CD4-positive, alpha-beta memory T cell (primary cell): ENCODE measurements at regions of chr5 and their contacts with region 1.

Region 1: GRCh38 chr5:141691867-141692532 is 10.0 kb upstream of the ARAP3 start:
- DNase-seq: peak; percentile 76 to 83 (median 76)
- H3K4me3 ChIP-seq: peak overlapping the region; percentile 31 to 76
- H3K4me3 Mint-ChIP-seq: peak overlapping the region; percentile 72 to 89 (median 82)
- H3K27ac ChIP-seq: no peak overlapping the region
- H3K27ac Mint-ChIP-seq: peak overlapping the region in 6 of 7 donors; percentile 36 to 85 (median 66)
- H3K4me1 ChIP-seq: peaks cover 22% of the 10 kb centered on the region
- H3K4me1 Mint-ChIP-seq: peaks cover 20 to 31% (median 24%) of the 10 kb centered on the region in 4 donors
- H3K27me3 ChIP-seq: no peaks in the 10 kb centered on the region
- H3K27me3 Mint-ChIP-seq: peaks cover 4% of the 10 kb centered on the region in 2 donors

Region 2: GRCh38 chr5:141590127-141590526 is 101.9 kb before region 1 on chr5:
- CTCF ChIA-PET with region 1: interaction called, 13 read pairs
- POLR2A ChIA-PET with region 1: no interaction called
- intact Hi-C with region 1: no loop called
- DNase-seq: no peak
- H3K4me3 ChIP-seq: no peak overlapping the region
- H3K4me3 Mint-ChIP-seq: peak overlapping the region in 1 of 8 donors; percentile 3
- H3K27ac ChIP-seq: no peak overlapping the region
- H3K27ac Mint-ChIP-seq: peak overlapping the region in 3 of 7 donors; percentile 13 to 59 (median 43)
- H3K4me1 ChIP-seq: peaks cover 52% of the 10 kb centered on the region
- H3K4me1 Mint-ChIP-seq: peaks cover 45 to 70% (median 55%) of the 10 kb centered on the region in 4 donors
- H3K27me3 ChIP-seq: no peaks in the 10 kb centered on the region
- H3K27me3 Mint-ChIP-seq: no peaks in the 10 kb centered on the region

Region 3: GRCh38 chr5:141605523-141606277 is 86.3 kb before region 1 on chr5:
- CTCF ChIA-PET with region 1: no interaction called
- POLR2A ChIA-PET with region 1: no interaction called
- intact Hi-C with region 1: no loop called
- DNase-seq: peak; percentile 85 to 93 (median 87)
- H3K4me3 ChIP-seq: peak overlapping the region; percentile 13 to 34
- H3K4me3 Mint-ChIP-seq: peak overlapping the region; percentile 67 to 87 (median 81)
- H3K27ac ChIP-seq: peak overlapping the region; percentile 72
- H3K27ac Mint-ChIP-seq: peak overlapping the region; percentile 89 to 95 (median 93)
- H3K4me1 ChIP-seq: peaks cover 97% of the 10 kb centered on the region
- H3K4me1 Mint-ChIP-seq: peaks cover 62 to 95% (median 79%) of the 10 kb centered on the region in 4 donors
- H3K27me3 ChIP-seq: no peaks in the 10 kb centered on the region
- H3K27me3 Mint-ChIP-seq: no peaks in the 10 kb centered on the region

Region 4: GRCh38 chr5:141811287-141812155 is 119.5 kb after region 1 on chr5:
- CTCF ChIA-PET with region 1: interaction called, 81 read pairs
- POLR2A ChIA-PET with region 1: no interaction called
- intact Hi-C with region 1: loop called (anchors 2 kb)
- DNase-seq: peak in 4 of 5 donors; percentile 4 to 45 (median 17)
- H3K4me3 ChIP-seq: no peak overlapping the region
- H3K4me3 Mint-ChIP-seq: peak overlapping the region in 1 of 8 donors; percentile 26
- H3K27ac ChIP-seq: no peak overlapping the region
- H3K27ac Mint-ChIP-seq: no peak overlapping the region
- H3K4me1 ChIP-seq: no peaks in the 10 kb centered on the region
- H3K4me1 Mint-ChIP-seq: peaks cover 0 to 3% (median under 1%) of the 10 kb centered on the region in 4 donors
- H3K27me3 ChIP-seq: peaks cover 15% of the 10 kb centered on the region
- H3K27me3 Mint-ChIP-seq: peaks cover 30 to 64% of the 10 kb centered on the region in 2 donors

Region 5: DNA sequence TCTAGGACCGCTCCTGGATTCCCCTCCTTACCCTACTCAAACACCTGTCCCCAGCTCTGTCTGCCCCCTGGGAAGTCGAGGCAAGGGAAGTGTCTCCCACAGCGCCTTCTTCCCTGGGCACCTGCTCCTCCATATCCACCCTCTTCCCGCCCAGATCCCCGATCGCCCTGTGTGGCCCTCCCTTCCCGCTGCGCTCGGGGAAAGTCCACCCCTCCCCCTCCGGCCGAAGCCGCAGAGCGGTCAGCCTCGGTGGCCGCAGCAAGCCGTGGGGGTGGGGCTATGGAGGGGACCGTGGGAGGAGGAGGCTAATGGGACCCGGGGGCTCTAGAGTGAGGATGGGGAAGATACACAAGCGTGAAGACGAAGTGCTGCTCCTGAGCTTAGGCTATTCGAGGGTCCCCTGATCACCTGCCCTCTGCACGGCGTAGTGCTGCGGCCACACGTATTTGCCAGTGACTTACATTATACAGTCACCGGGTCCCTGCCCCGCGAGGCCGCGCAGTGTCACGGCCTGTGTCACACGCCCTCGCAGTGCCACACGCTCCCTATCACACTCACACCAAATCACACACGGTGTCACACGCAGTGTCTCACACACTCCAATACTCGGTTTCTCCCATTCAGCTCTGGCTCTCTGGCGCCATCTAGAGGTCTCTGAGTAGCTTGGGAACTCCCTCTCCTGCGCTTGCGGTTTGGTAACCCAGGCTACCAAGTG is 186.9 kb after region 1 on chr5:
- CTCF ChIA-PET with region 1: interaction called, 239 read pairs
- POLR2A ChIA-PET with region 1: interaction called, 63 read pairs
- intact Hi-C with region 1: loop called (anchors 1 kb)
- DNase-seq: peak; percentile 88 to 93 (median 90)
- H3K4me3 ChIP-seq: peak overlapping the region; percentile 53 to 76
- H3K4me3 Mint-ChIP-seq: peak overlapping the region; percentile 78 to 92 (median 86)
- H3K27ac ChIP-seq: no peak overlapping the region
- H3K27ac Mint-ChIP-seq: peak overlapping the region; percentile 31 to 88 (median 62)
- H3K4me1 ChIP-seq: peaks cover 40% of the 10 kb centered on the region
- H3K4me1 Mint-ChIP-seq: peaks cover 20 to 49% (median 28%) of the 10 kb centered on the region in 4 donors
- H3K27me3 ChIP-seq: peaks cover 60% of the 10 kb centered on the region
- H3K27me3 Mint-ChIP-seq: peaks cover 54 to 63% of the 10 kb centered on the region in 2 donors

Region 6: GRCh38 chr5:141914199-141914743 is 222.3 kb after region 1 on chr5:
- CTCF ChIA-PET with region 1: interaction called, 12 read pairs
- POLR2A ChIA-PET with region 1: no interaction called
- intact Hi-C with region 1: no loop called
- DNase-seq: no peak
- H3K4me3 ChIP-seq: no peak overlapping the region
- H3K4me3 Mint-ChIP-seq: peak overlapping the region in 4 of 8 donors; percentile 13 to 67 (median 34)
- H3K27ac ChIP-seq: no peak overlapping the region
- H3K27ac Mint-ChIP-seq: no peak overlapping the region
- H3K4me1 ChIP-seq: peaks cover 12% of the 10 kb centered on the region
- H3K4me1 Mint-ChIP-seq: peaks cover 0 to 16% (median 7%) of the 10 kb centered on the region in 4 donors
- H3K27me3 ChIP-seq: peaks cover 16% of the 10 kb centered on the region
- H3K27me3 Mint-ChIP-seq: peaks cover 22 to 26% of the 10 kb centered on the region in 2 donors

Region 7: DNA sequence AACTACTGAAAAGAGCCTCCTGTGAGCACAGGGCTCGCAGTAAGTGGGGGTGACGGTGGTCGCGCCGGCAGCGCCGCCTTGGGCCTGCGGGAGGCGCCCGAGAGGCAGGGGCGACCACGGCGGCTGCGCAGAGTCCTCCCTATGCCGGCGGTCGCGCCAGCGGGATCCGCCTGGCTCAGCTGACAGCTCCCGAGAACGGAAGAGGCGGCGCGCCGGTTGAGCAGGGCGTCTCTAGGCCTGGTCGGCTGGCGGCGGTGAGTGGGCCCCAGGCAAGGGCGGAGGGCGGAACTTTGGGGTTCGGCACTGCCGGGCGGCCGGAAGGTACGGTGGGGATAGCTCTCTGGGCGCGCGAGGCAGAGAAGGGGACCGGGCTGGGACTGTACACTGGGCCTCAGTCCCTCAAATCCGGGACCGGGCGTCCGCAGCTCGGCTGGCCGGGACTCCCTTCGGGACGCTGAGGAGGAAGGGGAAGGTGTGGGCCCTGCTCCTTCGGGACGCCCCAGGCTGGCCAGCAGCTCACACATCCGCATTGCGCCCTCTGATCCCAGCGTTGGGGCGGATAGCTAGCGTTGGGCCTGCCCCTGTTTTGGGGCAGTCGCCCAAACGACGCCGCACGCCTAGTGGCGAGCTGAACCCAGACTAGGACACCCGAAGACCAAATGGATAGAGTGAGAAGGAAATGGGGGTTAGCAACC is 277.1 kb after region 1 on chr5 and contains the start of gene RNF14:
- CTCF ChIA-PET with region 1: interaction called, 250 read pairs
- POLR2A ChIA-PET with region 1: interaction called, 103 read pairs
- intact Hi-C with region 1: no loop called
- DNase-seq: peak; percentile 92 to 94 (median 93)
- H3K4me3 ChIP-seq: peak within 1 kb of the TSS; percentile 66 to 85
- H3K4me3 Mint-ChIP-seq: peak within 1 kb of the TSS; percentile 87 to 98 (median 94)
- H3K27ac ChIP-seq: peak within 1 kb of the TSS; percentile 96
- H3K27ac Mint-ChIP-seq: peak within 1 kb of the TSS; percentile 97 to 99 (median 98)
- H3K4me1 ChIP-seq: peaks cover 23% of the 10 kb centered on the region
- H3K4me1 Mint-ChIP-seq: peaks cover 20 to 42% (median 30%) of the 10 kb centered on the region in 4 donors
- H3K27me3 ChIP-seq: no peaks in the 10 kb centered on the region
- H3K27me3 Mint-ChIP-seq: no peaks in the 10 kb centered on the region
- total RNA-seq, gene RNF14: 35.4 to 38.5 TPM

Region 8: DNA sequence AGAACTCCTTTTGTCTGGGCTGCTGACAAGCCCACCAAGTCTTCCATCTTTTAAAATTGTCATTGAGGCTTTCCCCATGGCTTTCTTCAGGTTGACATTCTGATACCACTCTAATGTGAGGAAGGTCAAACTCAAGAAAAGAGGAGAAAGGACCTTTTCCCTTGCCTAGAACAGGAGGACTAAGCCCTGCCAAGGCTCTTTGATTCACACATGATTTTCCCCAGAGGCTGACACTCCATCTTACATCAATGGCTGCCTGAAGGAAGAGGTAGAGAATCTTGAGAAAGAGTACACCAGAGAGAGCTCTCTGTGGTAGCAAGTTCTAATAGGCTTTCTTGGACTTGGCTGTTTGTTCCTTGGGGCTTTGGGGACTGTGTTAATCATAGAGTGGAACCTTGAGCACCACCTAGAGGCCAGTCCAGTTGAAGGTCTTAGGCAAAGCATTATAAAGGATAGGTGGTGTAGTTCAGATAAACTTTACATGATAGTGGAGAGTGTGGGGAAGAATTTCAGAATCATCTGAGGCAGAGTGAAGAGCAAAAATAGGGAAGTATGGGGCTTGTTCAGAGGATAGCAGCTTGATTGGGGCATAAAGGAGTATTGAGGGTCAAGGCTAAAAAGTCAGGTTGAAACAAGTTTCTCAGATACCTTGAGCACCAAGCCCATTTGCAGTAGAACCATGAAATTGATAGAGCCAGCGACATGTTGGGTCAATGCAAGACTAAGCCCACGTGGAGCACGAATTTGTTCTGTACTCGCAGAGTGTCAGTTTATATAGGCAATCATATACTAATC is 453.3 kb after region 1 on chr5:
- CTCF ChIA-PET with region 1: interaction called, 45 read pairs
- POLR2A ChIA-PET with region 1: interaction called, 3 read pairs
- intact Hi-C with region 1: loop called (anchors 1 kb)
- DNase-seq: peak; percentile 54 to 66 (median 57)
- H3K4me3 ChIP-seq: no peak overlapping the region
- H3K4me3 Mint-ChIP-seq: no peak overlapping the region
- H3K27ac ChIP-seq: no peak overlapping the region
- H3K27ac Mint-ChIP-seq: no peak overlapping the region
- H3K4me1 ChIP-seq: no peaks in the 10 kb centered on the region
- H3K4me1 Mint-ChIP-seq: no peaks in the 10 kb centered on the region
- H3K27me3 ChIP-seq: no peaks in the 10 kb centered on the region
- H3K27me3 Mint-ChIP-seq: no peaks in the 10 kb centered on the region